ENCODE measurements at regions of chr14 and their contacts with region 1.

Region 1: DNA sequence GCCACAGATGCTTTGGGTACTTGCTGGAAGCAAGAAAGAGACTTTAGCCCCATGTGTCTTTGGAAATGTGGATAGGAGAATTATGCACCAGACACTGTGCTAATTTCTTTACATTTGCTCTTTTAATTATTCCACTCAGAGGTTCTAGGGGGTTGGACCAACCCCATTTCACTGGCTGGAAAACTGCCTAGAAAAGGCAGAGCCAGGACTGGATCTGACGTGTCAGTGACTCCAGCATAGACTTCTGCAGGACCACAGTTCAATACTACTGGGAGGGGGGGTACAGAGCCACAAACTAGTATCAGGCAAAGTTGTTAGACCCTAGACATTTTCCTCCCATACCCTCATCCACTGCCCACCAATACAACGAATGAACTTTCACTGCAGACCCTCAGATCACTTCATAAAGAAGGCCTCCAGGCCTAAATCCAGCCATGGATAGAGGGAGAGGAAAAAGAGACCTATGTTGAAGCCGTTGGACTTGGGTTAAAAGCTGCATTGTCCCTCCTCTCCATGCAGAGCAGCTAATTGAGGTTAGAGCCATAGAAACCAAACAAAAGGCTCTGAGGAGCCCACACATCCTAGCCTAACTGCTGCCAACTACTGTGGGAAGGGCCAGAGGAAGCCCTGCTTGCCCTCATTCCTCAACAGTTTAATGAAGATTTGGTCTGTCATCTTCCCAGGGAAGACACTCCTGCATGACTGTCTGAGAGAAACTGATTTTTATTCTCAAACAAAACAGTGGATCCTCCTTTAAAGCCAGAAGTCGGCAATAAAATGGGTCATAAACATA is 68.7 kb downstream of the STON2 start:
- DNase-seq: no peak
- H3K4me3 ChIP-seq: no peak overlapping the region
- H3K27ac ChIP-seq: peak overlapping the region in 20 of 59 donors; percentile 0 to 68 (median 29)
- H3K27me3 ChIP-seq: peaks cover 0 to 4% (median 0%) of the 10 kb centered on the region in 45 donors
- CTCF ChIP-seq: no peak

Region 2: GRCh38 chr14:81031488-81031887 is 299.9 kb before region 1 on chr14:
- intact Hi-C with region 1: no loop called
- DNase-seq: no peak
- H3K4me3 ChIP-seq: no peak overlapping the region
- H3K27ac ChIP-seq: no peak overlapping the region
- H3K27me3 ChIP-seq: no peaks in the 10 kb centered on the region
- CTCF ChIP-seq: no peak

Region 3: DNA sequence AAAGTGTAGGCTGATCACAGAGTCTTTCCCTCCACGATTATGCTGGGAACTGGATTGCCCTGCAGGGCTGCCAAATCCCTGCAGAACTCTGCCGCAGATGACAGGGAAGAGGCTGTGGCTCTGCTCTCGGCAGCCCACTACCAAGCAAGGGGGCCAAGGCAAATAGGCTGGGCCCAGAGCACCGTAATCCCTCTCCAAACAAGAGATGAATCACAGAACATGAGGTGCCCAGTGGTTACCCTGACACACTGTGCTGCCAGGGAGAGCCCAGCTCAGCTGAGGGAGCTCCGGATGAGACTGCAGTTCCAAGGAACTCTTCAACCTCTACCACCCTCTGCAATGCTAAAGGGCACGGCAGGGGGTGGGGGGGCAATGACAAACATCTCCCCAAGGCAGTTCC is 34.8 kb after region 1 on chr14:
- intact Hi-C with region 1: no loop called
- DNase-seq: peak in 3 of 10 donors; percentile 10 to 52 (median 47)
- H3K4me3 ChIP-seq: no peak overlapping the region
- H3K27ac ChIP-seq: peak overlapping the region in 25 of 59 donors; percentile 2 to 77 (median 42)
- H3K27me3 ChIP-seq: peaks cover 0 to 8% (median 0%) of the 10 kb centered on the region in 45 donors
- CTCF ChIP-seq: no peak

Region 4: GRCh38 chr14:81390696-81391095 is 59.3 kb after region 1 on chr14:
- intact Hi-C with region 1: loop called in 1 of 2 experiments (anchors 5 kb)
- DNase-seq: no peak
- H3K4me3 ChIP-seq: no peak overlapping the region
- H3K27ac ChIP-seq: peak overlapping the region in 1 of 59 donors; percentile 1
- H3K27me3 ChIP-seq: no peaks in the 10 kb centered on the region
- CTCF ChIP-seq: no peak

Measured in dorsolateral prefrontal cortex (tissue), 120 donors.